ENCODE measurements at regions of chr5 and their contacts with region 1.

Region 1: GRCh38 chr5:24633712-24634325 is 11.0 kb downstream of the CDH10 start:
- DNase-seq: no peak
- ATAC-seq: no peak
- H3K4me3 ChIP-seq: no peak overlapping the region
- H3K27ac ChIP-seq: no peak overlapping the region
- H3K4me1 ChIP-seq: no peaks in the 10 kb centered on the region
- H3K27me3 ChIP-seq: peaks cover 0 to 5% (median 0%) of the 10 kb centered on the region in 7 donors
- CTCF ChIP-seq: peak; percentile 29 to 73 (median 60)

Region 2: GRCh38 chr5:24444414-24444813 is 189.4 kb before region 1 on chr5:
- intact Hi-C with region 1: loop called in 2 of 10 experiments (anchors 10 kb)
- DNase-seq: peak in 1 of 2 donors; percentile 6
- ATAC-seq: peak in 6 of 8 donors; percentile 48 to 72 (median 60)
- H3K4me3 ChIP-seq: no peak overlapping the region
- H3K27ac ChIP-seq: no peak overlapping the region
- H3K4me1 ChIP-seq: no peaks in the 10 kb centered on the region
- H3K27me3 ChIP-seq: no peaks in the 10 kb centered on the region
- CTCF ChIP-seq: no peak